ENCODE measurements at regions of chr19 and their contacts with region 1.

Region 1: GRCh38 chr19:18291590-18292461 is 10.4 kb upstream of the JUND start:
- DNase-seq: no peak
- ATAC-seq: peak; percentile 65
- H3K4me3 ChIP-seq: peak overlapping the region; percentile 49 to 74
- H3K27ac ChIP-seq: peak overlapping the region; percentile 94
- H3K4me1 ChIP-seq: peaks cover 28 to 55% of the 10 kb centered on the region in 2 experiments
- H3K27me3 ChIP-seq: no peaks in the 10 kb centered on the region
- CTCF ChIP-seq: no peak
- POLR2A ChIP-seq: peak; percentile 2
- RAD21 ChIP-seq: no peak

Region 2: GRCh38 chr19:18322759-18323460 is 31.1 kb after region 1 on chr19 and contains the start of gene LSM4:
- CTCF ChIA-PET with region 1: no interaction called
- POLR2A ChIA-PET with region 1: interaction called, 15 read pairs
- RAD21 ChIA-PET with region 1: no interaction called
- intact Hi-C with region 1: no loop called
- DNase-seq: peak; percentile 98
- ATAC-seq: peak; percentile 93
- H3K4me3 ChIP-seq: peak within 1 kb of the TSS; percentile 78 to 97
- H3K27ac ChIP-seq: peak within 1 kb of the TSS; percentile 93
- H3K4me1 ChIP-seq: peaks cover 49 to 53% of the 10 kb centered on the region in 2 experiments
- H3K27me3 ChIP-seq: no peaks in the 10 kb centered on the region
- CTCF ChIP-seq: peak; percentile 29 to 51 (median 42)
- POLR2A ChIP-seq: peak; percentile 68
- RAD21 ChIP-seq: peak; percentile 69
- total RNA-seq, gene LSM4: 400 TPM

Region 3: DNA sequence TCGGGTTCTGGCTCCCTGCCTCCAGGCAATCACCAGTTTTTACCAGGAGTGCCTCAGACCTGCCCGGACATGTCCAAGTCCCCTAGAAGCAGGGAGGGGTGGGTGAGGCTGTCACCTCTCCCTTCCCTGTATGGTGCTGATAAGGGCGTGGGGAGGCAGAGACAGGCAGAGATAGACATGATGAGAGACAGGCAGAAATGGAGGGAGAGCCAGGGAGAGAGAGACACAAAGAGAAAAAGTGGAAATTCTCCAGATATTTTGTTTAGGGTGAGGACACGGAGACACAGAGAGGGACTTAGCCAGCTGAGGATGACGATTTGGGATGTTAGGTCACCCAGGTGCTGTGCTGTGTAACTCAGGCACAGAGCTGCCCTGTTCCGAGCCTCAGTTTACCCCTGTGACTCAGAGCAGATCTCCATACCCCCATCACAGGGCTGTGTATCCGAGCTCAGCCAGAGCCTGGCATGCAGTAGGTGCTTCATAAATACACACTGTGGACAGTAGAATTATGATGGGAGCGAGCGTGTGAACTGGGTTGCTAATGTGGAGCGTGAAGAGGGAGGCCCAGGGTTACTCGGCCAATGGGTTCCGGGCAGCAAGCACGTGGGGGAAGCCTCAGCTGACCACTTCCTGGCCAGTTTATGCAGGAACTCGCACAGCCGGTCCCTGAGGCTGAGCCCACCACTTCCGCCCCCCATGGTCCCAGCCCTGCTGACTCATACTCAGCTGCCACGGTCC is 82.2 kb after region 1 on chr19:
- CTCF ChIA-PET with region 1: no interaction called
- POLR2A ChIA-PET with region 1: no interaction called
- RAD21 ChIA-PET with region 1: interaction called in 1 of 2 experiments, 10 read pairs
- intact Hi-C with region 1: no loop called
- DNase-seq: peak; percentile 94
- ATAC-seq: peak; percentile 88
- H3K4me3 ChIP-seq: peak overlapping the region in 1 of 2 experiments; percentile 23; a peak in 3 of 4 replicates
- H3K27ac ChIP-seq: peak overlapping the region; percentile 92
- H3K4me1 ChIP-seq: peaks cover 61 to 64% of the 10 kb centered on the region in 2 experiments
- H3K27me3 ChIP-seq: no peaks in the 10 kb centered on the region
- CTCF ChIP-seq: no peak
- POLR2A ChIP-seq: no peak
- RAD21 ChIP-seq: no peak

Measured in HCT116 (cell line).